ENCODE measurements at regions of chr1 and their contacts with region 1.

Region 1: GRCh38 chr1:230120926-230121381 is 53.9 kb downstream of the GALNT2 start:
- DNase-seq: peak; percentile 51
- ATAC-seq: peak; percentile 93
- H3K4me3 ChIP-seq: no peak overlapping the region
- H3K27ac ChIP-seq: no peak overlapping the region
- H3K4me1 ChIP-seq: peaks cover 51% of the 10 kb centered on the region
- H3K27me3 ChIP-seq: no peaks in the 10 kb centered on the region
- CTCF ChIP-seq: peak; percentile 62
- EP300 ChIP-seq: 0 out of 4 replicates have a peak, but pooled peaks of 1 of the 2 experiments have one; percentile 13
- POLR2A ChIP-seq: no peak
- RAD21 ChIP-seq: no peak

Region 2: GRCh38 chr1:230066466-230067404 is 54.2 kb before region 1 on chr1 and contains the start of gene GALNT2:
- CTCF ChIA-PET with region 1: no interaction called
- POLR2A ChIA-PET with region 1: no interaction called
- in situ Hi-C with region 1: no loop called
- intact Hi-C with region 1: loop called (anchors 5 kb)
- DNase-seq: peak; percentile 80
- ATAC-seq: peak; percentile 84
- H3K4me3 ChIP-seq: peak within 1 kb of the TSS; percentile 84 to 93 (median 88)
- H3K27ac ChIP-seq: peak within 1 kb of the TSS; percentile 78
- H3K4me1 ChIP-seq: peaks cover 40% of the 10 kb centered on the region
- H3K27me3 ChIP-seq: no peaks in the 10 kb centered on the region
- CTCF ChIP-seq: peak; percentile 13; the same call in 1 of the 2 replicates
- EP300 ChIP-seq: no peak
- POLR2A ChIP-seq: peak; percentile 42 to 69; a peak in 2 of 4 replicates
- RAD21 ChIP-seq: peak; percentile 57; the same call in 1 of the 2 replicates
- total RNA-seq, gene GALNT2: 18.1 and 39.6 TPM in 2 replicates

Region 3: GRCh38 chr1:230084138-230084880 is 36.6 kb before region 1 on chr1:
- CTCF ChIA-PET with region 1: no interaction called
- POLR2A ChIA-PET with region 1: no interaction called
- in situ Hi-C with region 1: no loop called
- intact Hi-C with region 1: no loop called
- DNase-seq: peak; percentile 59
- ATAC-seq: peak; percentile 59
- H3K4me3 ChIP-seq: no peak overlapping the region
- H3K27ac ChIP-seq: no peak overlapping the region
- H3K4me1 ChIP-seq: peaks cover 15% of the 10 kb centered on the region
- H3K27me3 ChIP-seq: no peaks in the 10 kb centered on the region
- CTCF ChIP-seq: no peak
- EP300 ChIP-seq: peak in 1 of 2 experiments; percentile 34; a peak in 1 of 4 replicates
- POLR2A ChIP-seq: no peak
- RAD21 ChIP-seq: no peak